ENCODE measurements at regions of chr12 and their contacts with region 1.

Region 1: DNA sequence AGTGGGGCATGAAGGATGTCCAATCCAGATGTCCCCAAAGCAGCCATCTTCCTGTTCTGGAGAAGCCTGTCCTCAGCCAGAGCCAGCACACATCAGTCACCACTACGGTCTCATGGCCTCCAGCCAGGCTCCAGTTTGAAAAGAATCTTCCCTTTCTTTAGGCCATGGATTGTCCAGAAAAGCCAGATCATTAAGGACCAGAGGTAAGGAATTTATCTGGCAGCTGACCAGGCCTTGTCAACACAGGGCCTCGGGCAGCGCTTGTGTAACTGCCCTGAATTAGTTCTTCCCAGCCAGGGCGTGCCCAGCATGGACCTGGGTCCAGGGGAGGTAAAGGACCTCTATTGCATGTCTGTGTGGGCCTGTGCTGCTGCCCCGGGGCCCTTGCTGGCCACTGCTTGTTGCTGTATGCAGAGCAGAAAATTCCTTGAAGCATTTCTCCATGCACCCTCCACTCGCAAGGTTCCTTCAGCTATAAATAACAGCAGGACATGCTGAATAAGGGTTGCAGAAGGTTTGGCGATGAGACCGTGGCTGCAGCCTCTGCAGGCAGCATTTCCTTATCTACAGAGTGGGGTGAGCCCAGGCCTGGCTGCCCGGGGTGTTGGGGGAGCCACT is 21.7 kb upstream of the VPS37B start:
- DNase-seq: peak; percentile 93
- ATAC-seq: peak; percentile 11; the same call in 1 of the 2 replicates
- H3K4me3 ChIP-seq: no peak overlapping the region
- H3K27ac ChIP-seq: peak overlapping the region; percentile 91
- H3K4me1 ChIP-seq: peaks cover 38% of the 10 kb centered on the region
- H3K27me3 ChIP-seq: no peaks in the 10 kb centered on the region
- CTCF ChIP-seq: no peak

Region 2: DNA sequence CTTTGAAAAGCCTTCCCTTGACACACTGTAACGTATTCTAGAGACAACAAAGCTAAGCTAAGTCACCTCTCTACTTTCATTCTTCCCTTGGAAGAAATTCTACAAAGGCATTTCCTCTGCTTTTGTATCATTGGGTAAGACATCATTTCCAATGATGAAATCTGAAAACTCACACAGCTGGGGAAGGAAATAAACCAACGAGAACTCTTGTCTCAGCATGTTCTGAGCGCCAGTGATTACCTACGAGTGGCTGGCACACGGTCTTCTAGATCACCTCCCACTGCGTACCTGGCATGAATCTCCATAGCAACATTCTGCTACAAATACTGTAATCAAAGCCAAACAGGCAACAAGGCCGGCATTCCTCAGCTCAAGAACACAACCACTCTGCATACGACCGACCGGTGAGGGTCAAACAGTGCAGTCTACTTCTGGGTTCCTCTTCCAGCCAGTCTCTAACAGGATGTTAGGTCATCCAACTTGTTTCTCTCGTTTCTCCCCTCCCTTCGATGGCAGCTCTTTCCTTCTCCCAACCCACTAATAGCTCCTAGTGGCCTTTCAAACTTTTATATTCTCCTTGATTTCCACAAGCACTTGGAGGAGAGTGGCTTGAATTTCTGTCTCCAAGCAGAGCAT is 29.3 kb before region 1 on chr12:
- CTCF ChIA-PET with region 1: interaction called, 6 read pairs
- POLR2A ChIA-PET with region 1: interaction called, 10 read pairs
- intact Hi-C with region 1: no loop called
- DNase-seq: peak; percentile 90
- ATAC-seq: peak; percentile 45
- H3K4me3 ChIP-seq: peak overlapping the region; percentile 48
- H3K27ac ChIP-seq: peak overlapping the region; percentile 90
- H3K4me1 ChIP-seq: peaks cover 92% of the 10 kb centered on the region
- H3K27me3 ChIP-seq: no peaks in the 10 kb centered on the region
- CTCF ChIP-seq: no peak

Region 3: GRCh38 chr12:122895705-122896636 is 21.6 kb before region 1 on chr12 and contains the start of gene VPS37B:
- CTCF ChIA-PET with region 1: interaction called, 6 read pairs
- POLR2A ChIA-PET with region 1: interaction called, 10 read pairs
- intact Hi-C with region 1: loop called (anchors 2 kb)
- DNase-seq: peak; percentile 82
- ATAC-seq: peak; percentile 2
- H3K4me3 ChIP-seq: peak within 1 kb of the TSS; percentile 89
- H3K27ac ChIP-seq: peak within 1 kb of the TSS; percentile 90
- H3K4me1 ChIP-seq: peaks cover 69% of the 10 kb centered on the region
- H3K27me3 ChIP-seq: no peaks in the 10 kb centered on the region
- CTCF ChIP-seq: no peak
- total RNA-seq, gene VPS37B: 74.3 and 80.8 TPM in 2 replicates

Region 4: GRCh38 chr12:122937622-122938091 is 20.0 kb after region 1 on chr12:
- CTCF ChIA-PET with region 1: no interaction called
- POLR2A ChIA-PET with region 1: interaction called, 18 read pairs
- intact Hi-C with region 1: no loop called
- DNase-seq: no peak
- ATAC-seq: no peak
- H3K4me3 ChIP-seq: no peak overlapping the region
- H3K27ac ChIP-seq: no peak overlapping the region
- H3K4me1 ChIP-seq: peaks cover 17% of the 10 kb centered on the region
- H3K27me3 ChIP-seq: no peaks in the 10 kb centered on the region
- CTCF ChIP-seq: no peak

Region 5: GRCh38 chr12:122946690-122947341 is 29.2 kb after region 1 on chr12:
- CTCF ChIA-PET with region 1: interaction called, 3 read pairs
- POLR2A ChIA-PET with region 1: no interaction called
- intact Hi-C with region 1: loop called (anchors 2 kb)
- DNase-seq: peak; percentile 99
- ATAC-seq: peak; percentile 84
- H3K4me3 ChIP-seq: no peak overlapping the region
- H3K27ac ChIP-seq: peak overlapping the region; percentile 94
- H3K4me1 ChIP-seq: peaks cover 65% of the 10 kb centered on the region
- H3K27me3 ChIP-seq: no peaks in the 10 kb centered on the region
- CTCF ChIP-seq: peak; percentile 71

Measured in PC-3 (cell line).